HEK293T (cell line): ENCODE measurements at regions of chrX and their contacts with region 1.

Region 1: GRCh38 chrX:13235930-13236329 is 83.9 kb downstream of the ATXN3L start:
- DNase-seq: no peak

Region 2: DNA sequence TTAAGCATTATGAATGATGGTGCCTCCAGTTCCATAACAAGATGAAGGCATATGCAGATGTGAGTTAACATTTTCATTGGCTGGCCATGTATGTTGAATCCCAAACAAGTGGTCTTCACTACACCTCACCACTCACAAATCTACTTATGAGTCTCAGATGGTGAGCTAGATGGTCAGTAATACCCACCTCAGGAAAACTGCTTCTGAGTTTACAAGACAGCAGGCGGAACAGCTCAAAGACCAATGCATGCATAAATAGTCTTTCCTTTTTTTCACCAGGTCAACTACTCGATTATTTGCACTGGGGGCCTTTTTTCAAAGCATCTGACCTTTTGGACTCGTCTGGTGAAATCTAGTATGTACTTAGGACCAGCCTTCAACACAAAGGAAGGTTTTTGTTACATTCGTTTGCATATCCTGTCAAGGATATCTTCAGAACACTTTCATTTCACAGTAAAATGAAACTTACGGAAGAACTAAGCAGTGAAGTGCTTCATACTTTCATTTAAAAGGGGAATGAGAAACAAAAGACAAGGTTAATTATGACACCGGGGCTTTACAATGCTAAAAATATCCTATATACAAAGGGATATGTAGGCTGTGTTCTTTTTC is 392.2 kb before region 1 on chrX:
- CTCF ChIA-PET with region 1: no interaction called
- POLR2A ChIA-PET with region 1: no interaction called
- DNase-seq: no peak

Region 3: DNA sequence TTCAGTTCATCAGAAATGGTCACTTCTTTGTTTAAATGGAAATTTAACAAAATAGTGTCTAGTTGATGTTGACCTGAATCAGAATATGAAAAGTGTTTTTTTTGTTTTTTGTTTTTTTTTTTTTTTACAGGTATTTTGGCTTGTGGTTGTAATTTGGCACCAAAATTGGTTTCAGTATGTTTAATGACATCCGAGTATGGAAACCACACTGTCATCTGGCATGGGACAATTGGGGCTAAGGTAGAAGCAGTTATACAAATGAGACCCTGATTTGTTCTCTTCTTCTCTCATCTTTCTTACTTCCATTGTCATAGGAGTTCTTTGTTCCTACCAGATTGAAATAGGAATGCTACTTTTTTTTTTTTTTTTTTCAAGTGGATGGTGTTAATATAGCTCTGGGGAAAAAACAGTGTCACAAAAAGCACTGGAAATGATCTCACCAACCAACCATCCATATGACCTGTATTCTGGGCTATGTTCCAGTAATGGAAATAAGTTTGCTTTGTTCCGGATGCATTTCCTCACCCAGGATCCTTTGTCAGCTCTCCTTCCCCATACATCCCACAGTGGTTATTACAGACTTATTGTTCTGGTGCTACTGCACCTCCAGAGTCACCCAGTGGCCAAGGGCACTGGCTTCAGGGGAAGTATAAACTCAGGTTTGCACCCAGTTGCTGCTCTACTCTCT is 11.9 kb before region 1 on chrX:
- CTCF ChIA-PET with region 1: no interaction called
- POLR2A ChIA-PET with region 1: no interaction called
- DNase-seq: no peak

Region 4: DNA sequence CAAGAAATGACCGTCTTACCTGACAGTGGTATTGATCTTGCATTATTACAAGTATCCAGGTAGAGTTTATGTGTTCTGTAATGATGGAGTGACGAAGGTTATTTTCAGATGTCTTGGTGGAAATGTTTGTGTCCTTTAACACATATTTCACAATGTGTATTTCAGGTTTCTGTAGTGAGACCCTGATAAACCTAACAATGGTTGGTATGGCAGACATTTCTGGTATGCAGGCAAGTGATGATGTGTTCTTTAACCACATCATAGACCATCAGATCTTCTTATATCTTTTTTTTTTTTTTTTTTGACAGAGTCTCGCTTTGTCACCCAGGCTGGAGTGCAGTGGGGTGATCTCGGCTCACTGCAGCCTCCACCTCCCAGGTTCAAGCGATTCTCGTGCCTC is 98.6 kb after region 1 on chrX:
- CTCF ChIA-PET with region 1: interaction called, 10 read pairs
- POLR2A ChIA-PET with region 1: no interaction called
- DNase-seq: no peak